ENCODE measurements at regions of chr11 and their contacts with region 1.

Region 1: DNA sequence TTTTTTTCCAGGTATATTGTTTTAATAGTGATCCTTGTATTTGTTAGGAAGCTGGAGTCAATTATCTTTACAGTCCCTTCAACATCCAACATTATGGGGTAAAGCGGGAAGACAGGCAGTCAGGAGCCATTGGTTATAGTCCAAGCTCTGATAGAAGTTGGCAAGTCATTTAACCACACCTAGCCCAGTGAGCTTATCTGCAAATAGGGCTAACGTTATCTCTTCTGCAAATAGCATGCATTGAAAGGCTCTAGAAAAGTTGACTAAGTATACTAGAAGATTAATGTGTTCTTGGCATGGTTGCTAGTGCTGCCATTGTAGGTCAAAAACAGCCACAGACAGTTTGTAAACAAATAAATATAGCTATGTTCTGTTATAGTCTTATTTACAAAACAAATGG is 520.7 kb downstream of the OPCML start:
- DNase-seq: no peak
- H3K4me3 ChIP-seq: no peak overlapping the region
- H3K27ac ChIP-seq: no peak overlapping the region
- H3K4me1 ChIP-seq: no peaks in the 10 kb centered on the region
- H3K27me3 ChIP-seq: peaks cover 0 to 8% of the 10 kb centered on the region in 2 donors
- CTCF ChIP-seq: no peak
- POLR2A ChIP-seq: no peak

Region 2: DNA sequence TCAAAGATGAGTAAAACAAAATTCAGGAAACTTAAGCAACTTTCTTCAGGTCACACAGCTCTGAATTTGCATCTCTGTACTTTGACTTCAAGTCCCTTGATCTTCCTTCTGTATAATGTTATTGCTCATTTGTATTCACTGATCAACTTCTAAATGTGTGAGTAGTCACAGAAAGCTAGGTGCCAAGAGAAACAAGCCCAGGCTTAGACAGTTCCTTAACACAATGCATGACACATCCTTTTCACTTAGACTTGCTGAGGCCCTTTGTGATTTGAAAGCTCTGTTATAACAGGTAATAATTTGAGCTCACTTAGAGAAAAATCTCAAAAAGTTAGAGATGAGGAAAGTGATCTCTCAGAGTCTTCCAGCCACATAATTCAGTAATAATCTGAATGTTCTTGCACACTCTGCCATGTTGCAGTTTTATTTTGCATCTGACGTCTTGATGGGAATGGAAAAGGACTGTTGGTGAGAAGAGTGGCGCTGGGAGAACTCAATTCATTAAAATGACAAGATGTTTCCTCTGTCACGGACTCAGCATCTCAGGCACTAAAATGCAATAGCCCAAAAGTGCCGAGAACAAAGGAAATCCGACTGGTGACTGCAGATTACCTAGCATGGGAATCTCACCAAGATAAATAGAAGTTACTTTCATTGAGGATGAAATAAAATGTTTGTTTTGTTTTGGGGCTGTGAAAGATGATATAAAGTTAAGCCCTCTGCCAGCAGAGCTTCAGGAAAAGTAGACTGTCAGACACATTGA is 144.6 kb before region 1 on chr11:
- intact Hi-C with region 1: no loop called
- DNase-seq: no peak
- H3K4me3 ChIP-seq: no peak overlapping the region
- H3K27ac ChIP-seq: no peak overlapping the region
- H3K4me1 ChIP-seq: no peaks in the 10 kb centered on the region
- H3K27me3 ChIP-seq: peaks cover 0 to 3% of the 10 kb centered on the region in 2 donors
- CTCF ChIP-seq: no peak
- POLR2A ChIP-seq: no peak

Region 3: GRCh38 chr11:133040289-133040900 is 28.8 kb after region 1 on chr11:
- intact Hi-C with region 1: no loop called
- DNase-seq: no peak
- H3K4me3 ChIP-seq: no peak overlapping the region
- H3K27ac ChIP-seq: no peak overlapping the region
- H3K4me1 ChIP-seq: no peaks in the 10 kb centered on the region
- H3K27me3 ChIP-seq: peaks cover 0 to 26% of the 10 kb centered on the region in 2 donors
- CTCF ChIP-seq: no peak
- POLR2A ChIP-seq: no peak

Region 4: DNA sequence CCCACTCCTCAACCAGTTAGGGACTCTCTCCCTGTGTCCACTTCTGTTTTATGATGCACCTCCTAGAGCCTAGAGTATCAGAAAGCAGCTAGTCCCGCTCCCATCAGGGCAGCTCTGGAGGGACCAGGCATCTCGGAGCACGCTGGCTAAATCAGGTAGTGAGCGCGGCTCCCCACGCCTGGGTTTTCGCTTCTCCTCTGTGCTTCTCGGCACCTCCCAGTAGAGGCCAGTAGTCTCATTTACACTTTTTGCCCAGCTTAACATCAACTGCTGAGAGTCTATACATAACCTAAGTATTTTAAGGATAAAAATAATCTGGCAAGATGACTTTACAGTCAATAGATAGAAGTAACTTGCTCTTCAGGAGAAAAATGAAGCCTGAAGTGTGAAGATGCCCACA is 46.9 kb after region 1 on chr11:
- intact Hi-C with region 1: loop called (anchors 2 kb)
- DNase-seq: no peak
- H3K4me3 ChIP-seq: no peak overlapping the region
- H3K27ac ChIP-seq: no peak overlapping the region
- H3K4me1 ChIP-seq: no peaks in the 10 kb centered on the region
- H3K27me3 ChIP-seq: peaks cover 0 to 25% of the 10 kb centered on the region in 2 donors
- CTCF ChIP-seq: no peak
- POLR2A ChIP-seq: no peak